CD4-positive, alpha-beta memory T cell (primary cell): ENCODE measurements at regions of chr15 and their contacts with region 1.

Region 1: DNA sequence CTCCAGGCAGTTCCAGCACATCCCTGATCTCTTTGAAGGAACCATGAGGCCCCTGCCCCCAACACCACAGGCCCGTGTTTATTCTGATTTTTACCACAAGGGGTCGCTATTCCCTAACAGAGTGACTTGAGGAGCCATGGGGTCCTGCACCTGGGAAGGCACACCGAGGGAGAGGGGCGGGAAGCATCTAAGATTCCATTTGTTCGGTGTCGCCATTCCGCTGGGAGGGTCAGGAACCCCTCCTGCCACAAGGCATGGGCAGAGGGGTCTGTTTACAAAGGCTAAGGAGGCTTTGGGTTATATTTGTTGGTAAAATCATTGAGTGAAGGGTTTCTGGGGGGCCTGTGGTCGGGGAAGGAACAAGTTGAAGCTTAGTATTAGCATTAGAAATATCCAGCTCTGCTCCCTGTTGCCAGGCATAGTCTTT is 77.1 kb downstream of the WDR76 start:
- DNase-seq: peak; percentile 37 to 57 (median 45)
- H3K4me3 ChIP-seq: no peak overlapping the region
- H3K4me3 Mint-ChIP-seq: peak overlapping the region in 2 of 8 donors; percentile 54 to 70
- H3K27ac ChIP-seq: no peak overlapping the region
- H3K27ac Mint-ChIP-seq: no peak overlapping the region
- H3K4me1 ChIP-seq: no peaks in the 10 kb centered on the region
- H3K4me1 Mint-ChIP-seq: peaks cover 2 to 9% (median 4%) of the 10 kb centered on the region in 4 donors
- H3K27me3 ChIP-seq: no peaks in the 10 kb centered on the region
- H3K27me3 Mint-ChIP-seq: peaks cover 0 to 2% of the 10 kb centered on the region in 2 donors

Region 2: DNA sequence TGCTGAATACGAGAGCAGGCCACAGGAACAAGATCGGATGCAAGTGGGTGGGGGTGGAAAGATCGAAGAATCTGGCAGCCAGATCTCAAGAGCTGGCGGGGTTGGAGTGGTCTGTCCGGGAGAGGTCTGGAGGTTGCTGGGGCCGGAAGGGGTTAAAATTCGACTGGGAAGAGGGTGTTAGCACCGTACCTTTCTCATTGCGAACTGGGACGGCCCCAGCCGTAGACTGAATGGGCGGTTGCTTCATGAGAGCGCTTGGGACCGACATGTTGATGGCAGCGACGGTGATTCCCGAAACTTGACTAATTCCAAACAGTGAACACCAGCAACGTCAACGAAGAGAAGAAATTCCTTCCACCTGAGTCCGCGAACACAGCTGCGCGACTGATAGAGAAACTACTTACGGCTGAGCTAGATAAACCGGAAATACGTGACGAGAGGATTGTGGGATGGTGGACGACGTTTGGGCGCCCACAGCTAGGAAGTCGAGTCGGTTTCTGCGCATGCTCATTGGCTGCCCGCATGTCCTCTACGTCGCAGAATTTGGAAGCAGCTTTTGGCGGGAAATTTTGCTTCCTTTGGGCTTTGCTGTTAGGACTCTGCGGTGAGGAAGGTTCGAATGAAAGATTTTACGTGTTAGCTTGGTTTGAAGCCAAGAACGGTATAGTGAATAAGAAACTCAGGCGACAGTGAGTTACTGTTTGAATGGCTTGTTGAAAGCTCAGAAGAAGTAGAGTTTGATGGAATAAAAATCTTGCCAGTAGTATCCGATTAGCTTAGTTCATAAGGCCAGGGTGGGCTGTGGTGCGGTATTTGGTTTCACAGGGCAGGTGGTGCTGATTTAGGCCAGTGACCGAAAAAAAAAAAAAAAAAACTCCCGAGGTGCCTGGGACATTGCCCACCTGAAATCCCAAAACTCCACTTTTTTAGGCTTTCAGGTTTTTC is 79.3 kb before region 1 on chr15 and contains the start of gene MFAP1:
- CTCF ChIA-PET with region 1: no interaction called
- POLR2A ChIA-PET with region 1: no interaction called
- intact Hi-C with region 1: no loop called
- DNase-seq: peak; percentile 88 to 95 (median 93)
- H3K4me3 ChIP-seq: peak within 1 kb of the TSS; percentile 92 to 100
- H3K4me3 Mint-ChIP-seq: peak within 1 kb of the TSS; percentile 96 to 99 (median 98)
- H3K27ac ChIP-seq: peak within 1 kb of the TSS; percentile 99
- H3K27ac Mint-ChIP-seq: peak within 1 kb of the TSS; percentile 92 to 99 (median 99)
- H3K4me1 ChIP-seq: peaks cover 67% of the 10 kb centered on the region
- H3K4me1 Mint-ChIP-seq: peaks cover 29 to 71% (median 52%) of the 10 kb centered on the region in 4 donors
- H3K27me3 ChIP-seq: no peaks in the 10 kb centered on the region
- H3K27me3 Mint-ChIP-seq: no peaks in the 10 kb centered on the region
- total RNA-seq, gene MFAP1: 24.9 to 25.9 TPM

Region 3: DNA sequence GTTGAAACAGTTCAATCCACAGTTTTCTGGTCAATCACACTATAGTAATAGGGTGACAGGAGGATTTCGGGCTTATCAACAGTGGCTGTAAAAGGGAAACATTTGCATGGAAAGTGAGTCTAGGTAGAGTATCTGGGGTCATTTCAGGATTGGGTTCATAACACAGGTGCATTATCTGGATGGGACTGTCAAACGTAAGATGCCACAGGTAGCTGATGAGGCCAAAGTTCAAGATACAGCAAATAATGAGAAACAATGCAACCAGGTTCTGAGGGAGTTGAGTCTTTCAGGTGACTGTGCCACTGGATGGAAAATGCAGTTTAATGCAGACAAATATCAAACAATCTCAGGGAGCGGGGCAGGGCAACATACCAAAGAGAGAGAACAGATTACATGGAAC is 14.8 kb before region 1 on chr15:
- CTCF ChIA-PET with region 1: interaction called, 10 read pairs
- POLR2A ChIA-PET with region 1: no interaction called
- intact Hi-C with region 1: no loop called
- DNase-seq: no peak
- H3K4me3 ChIP-seq: no peak overlapping the region
- H3K4me3 Mint-ChIP-seq: no peak overlapping the region
- H3K27ac ChIP-seq: no peak overlapping the region
- H3K27ac Mint-ChIP-seq: no peak overlapping the region
- H3K4me1 ChIP-seq: no peaks in the 10 kb centered on the region
- H3K4me1 Mint-ChIP-seq: no peaks in the 10 kb centered on the region
- H3K27me3 ChIP-seq: no peaks in the 10 kb centered on the region
- H3K27me3 Mint-ChIP-seq: no peaks in the 10 kb centered on the region

Region 4: DNA sequence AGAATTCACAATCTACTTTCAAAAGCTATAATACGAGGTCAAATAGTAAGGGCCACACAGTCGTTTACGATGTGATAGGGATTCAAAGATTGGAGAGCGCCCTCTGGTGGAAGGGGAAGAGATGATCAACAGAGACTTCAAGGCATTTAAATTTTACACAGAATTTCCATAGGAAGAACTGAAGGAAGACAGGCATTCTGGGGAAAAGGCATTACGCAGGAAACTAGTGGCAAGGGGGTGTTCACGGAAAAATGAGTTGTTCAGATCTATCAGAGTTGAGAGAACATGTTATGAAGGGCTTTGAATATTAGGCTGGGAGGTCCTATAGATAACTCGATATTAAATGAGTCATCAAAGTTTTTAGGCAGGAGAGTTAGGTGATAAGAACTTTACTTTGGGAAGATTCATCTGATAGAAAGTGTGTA is 162.5 kb after region 1 on chr15:
- CTCF ChIA-PET with region 1: interaction called, 11 read pairs
- POLR2A ChIA-PET with region 1: no interaction called
- intact Hi-C with region 1: no loop called
- DNase-seq: peak; percentile 33 to 42 (median 38)
- H3K4me3 ChIP-seq: no peak overlapping the region
- H3K4me3 Mint-ChIP-seq: peak overlapping the region in 1 of 8 donors; percentile 9
- H3K27ac ChIP-seq: no peak overlapping the region
- H3K27ac Mint-ChIP-seq: no peak overlapping the region
- H3K4me1 ChIP-seq: no peaks in the 10 kb centered on the region
- H3K4me1 Mint-ChIP-seq: peaks cover 0 to 3% (median 1%) of the 10 kb centered on the region in 4 donors
- H3K27me3 ChIP-seq: no peaks in the 10 kb centered on the region
- H3K27me3 Mint-ChIP-seq: peaks cover 9% of the 10 kb centered on the region in 2 donors

Region 5: GRCh38 chr15:44501768-44502366 is 598.0 kb after region 1 on chr15:
- CTCF ChIA-PET with region 1: interaction called, 4 read pairs
- POLR2A ChIA-PET with region 1: no interaction called
- intact Hi-C with region 1: loop called (anchors 5 kb)
- DNase-seq: peak in 4 of 5 donors; percentile 16 to 34 (median 26)
- H3K4me3 ChIP-seq: no peak overlapping the region
- H3K4me3 Mint-ChIP-seq: no peak overlapping the region
- H3K27ac ChIP-seq: no peak overlapping the region
- H3K27ac Mint-ChIP-seq: peak overlapping the region in 1 of 7 donors; percentile 36
- H3K4me1 ChIP-seq: no peaks in the 10 kb centered on the region
- H3K4me1 Mint-ChIP-seq: peaks cover 5 to 7% (median 6%) of the 10 kb centered on the region in 4 donors
- H3K27me3 ChIP-seq: no peaks in the 10 kb centered on the region
- H3K27me3 Mint-ChIP-seq: no peaks in the 10 kb centered on the region